HEK293T (cell line): ENCODE measurements at regions of chr3 and their contacts with region 1.

Region 1: GRCh38 chr3:182309120-182309519 is 484.2 kb upstream of the ATP11B start:
- DNase-seq: no peak

Region 2: DNA sequence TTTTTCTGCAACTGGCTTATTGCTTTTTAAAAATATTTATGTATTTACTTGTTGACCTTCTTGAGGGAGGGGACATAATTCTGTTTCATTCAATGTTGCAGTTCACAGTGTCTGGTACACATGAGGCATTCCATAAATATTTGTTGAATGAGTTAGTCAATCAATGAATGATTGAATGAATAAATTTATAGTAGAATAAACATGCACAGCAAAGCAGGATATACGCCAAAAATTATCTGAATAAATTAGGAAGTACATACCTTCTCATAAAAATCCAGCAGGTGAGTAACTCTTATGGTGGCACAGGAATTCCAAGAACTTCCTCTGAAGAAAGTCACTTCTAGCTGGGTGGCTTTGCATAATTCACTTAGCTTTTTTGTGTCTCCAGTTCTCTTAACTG is 14.8 kb after region 1 on chr3:
- CTCF ChIA-PET with region 1: no interaction called
- POLR2A ChIA-PET with region 1: no interaction called
- DNase-seq: no peak

Region 3: DNA sequence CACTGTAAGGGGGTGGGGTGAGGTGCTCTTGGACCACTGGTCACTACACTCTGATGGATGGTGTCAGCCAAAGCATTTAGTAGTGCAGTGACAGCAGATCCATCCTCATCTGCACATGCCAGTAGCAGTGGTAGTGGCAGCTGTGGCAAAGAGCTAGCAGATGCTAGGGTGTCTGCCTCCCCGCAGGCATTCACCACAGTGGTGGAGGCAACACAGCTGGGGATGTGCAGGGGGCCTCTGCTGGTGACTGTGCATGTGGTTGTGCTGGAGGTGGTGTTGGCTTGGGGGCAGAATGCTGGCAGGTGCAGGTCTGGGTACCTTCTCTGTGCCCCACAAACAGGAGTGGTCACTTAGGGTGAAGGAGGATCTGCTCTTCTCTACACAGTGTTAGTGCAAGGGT is 690.6 kb after region 1 on chr3:
- CTCF ChIA-PET with region 1: interaction called, 10 read pairs
- POLR2A ChIA-PET with region 1: no interaction called
- DNase-seq: no peak